Breast epithelium (tissue), 4 donors: ENCODE measurements at regions of chr16 and their contacts with region 1.

Region 1: DNA sequence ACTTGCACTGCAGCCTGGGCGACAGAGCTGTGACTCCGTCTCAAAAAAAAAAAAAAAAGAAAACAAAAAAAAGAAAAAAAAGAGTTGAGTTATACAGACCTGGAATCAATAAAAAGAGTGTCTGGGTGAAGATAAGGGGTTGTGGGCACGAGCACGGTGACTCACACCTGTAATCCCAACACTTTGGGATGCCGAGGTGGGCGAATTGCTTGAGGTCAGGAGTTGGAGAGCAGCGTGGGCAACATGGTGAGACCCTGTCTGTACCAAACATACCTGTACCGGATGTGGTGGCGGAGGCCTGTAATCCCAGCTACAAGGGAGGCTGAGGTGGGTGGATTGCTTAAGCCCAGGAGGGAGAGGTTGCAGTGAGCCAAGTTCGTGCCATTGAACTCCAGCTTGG is 1.3 kb upstream of the TRAP1 start:
- DNase-seq: no peak
- H3K4me3 ChIP-seq: no peak overlapping the region
- H3K27ac ChIP-seq: no peak overlapping the region
- H3K4me1 ChIP-seq: peaks cover 0 to 9% of the 10 kb centered on the region in 2 donors
- H3K27me3 ChIP-seq: no peaks in the 10 kb centered on the region
- CTCF ChIP-seq: no peak
- POLR2A ChIP-seq: no peak

Region 2: DNA sequence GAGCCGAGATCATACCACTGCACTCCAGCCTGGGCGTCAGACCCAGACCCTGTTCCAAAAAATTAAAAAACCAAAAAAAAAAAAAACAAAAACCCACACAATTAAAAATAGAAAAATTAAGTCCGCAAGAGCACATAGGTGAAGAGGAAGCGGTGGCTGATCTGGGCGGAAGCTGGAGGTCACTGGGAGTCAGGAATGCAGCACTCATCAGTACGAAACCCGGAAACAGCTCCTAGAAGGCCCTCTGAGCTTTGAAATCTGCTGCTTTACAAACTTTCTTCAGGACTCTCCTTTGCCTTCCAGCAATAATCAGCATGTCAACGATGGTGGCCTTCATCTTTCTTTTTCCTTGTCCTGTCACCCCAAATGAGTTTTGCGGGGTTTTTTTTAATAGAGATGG is 30.8 kb before region 1 on chr16:
- intact Hi-C with region 1: loop called (anchors 1 kb)
- DNase-seq: no peak
- H3K4me3 ChIP-seq: no peak overlapping the region
- H3K27ac ChIP-seq: no peak overlapping the region
- H3K4me1 ChIP-seq: no peaks in the 10 kb centered on the region
- H3K27me3 ChIP-seq: no peaks in the 10 kb centered on the region
- CTCF ChIP-seq: no peak
- POLR2A ChIP-seq: no peak

Region 3: GRCh38 chr16:3734758-3735221 is 16.2 kb after region 1 on chr16:
- intact Hi-C with region 1: no loop called
- DNase-seq: no peak
- H3K4me3 ChIP-seq: no peak overlapping the region
- H3K27ac ChIP-seq: no peak overlapping the region
- H3K4me1 ChIP-seq: no peaks in the 10 kb centered on the region
- H3K27me3 ChIP-seq: no peaks in the 10 kb centered on the region
- CTCF ChIP-seq: no peak
- POLR2A ChIP-seq: no peak